ENCODE measurements at regions of chr18 and their contacts with region 1.

Region 1: DNA sequence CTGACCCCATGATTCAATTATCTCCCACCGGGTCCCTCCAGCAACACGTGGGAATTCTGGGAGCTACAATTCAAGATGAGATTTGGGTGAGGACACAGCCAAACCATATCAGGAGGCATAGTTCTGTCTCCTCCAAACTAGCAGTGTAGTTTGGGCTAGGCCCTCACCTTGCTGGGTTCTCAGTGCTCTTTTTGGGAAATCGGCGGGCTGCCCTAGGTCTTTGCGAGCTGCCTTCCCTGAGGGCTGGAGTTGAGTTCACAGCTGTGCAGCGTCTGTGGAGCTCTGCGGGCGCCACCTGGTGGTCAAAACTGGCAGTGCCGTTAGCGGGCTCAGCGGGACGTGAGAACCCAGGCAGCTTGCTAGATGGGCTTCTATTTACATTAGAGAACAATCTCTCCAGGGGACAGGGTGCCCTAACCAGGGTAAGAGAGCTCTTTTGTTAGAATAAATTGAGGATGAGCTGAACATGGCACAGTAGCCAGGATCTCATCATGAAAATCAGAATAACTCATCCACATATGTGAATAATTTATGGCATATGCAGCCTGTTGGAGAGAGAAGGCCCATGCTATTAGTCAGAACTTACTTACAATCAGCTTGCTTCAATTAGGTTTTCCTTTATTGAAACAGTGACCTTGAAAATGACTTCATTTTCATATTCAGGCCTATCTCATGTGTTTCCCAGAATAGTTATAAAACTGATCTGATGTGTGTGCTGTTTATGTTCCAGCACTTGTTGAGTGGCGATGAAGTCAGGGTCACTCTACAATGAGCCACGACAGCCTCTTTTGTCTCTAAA is 27.4 kb upstream of the YES1 start:
- DNase-seq: peak; percentile 56 to 99 (median 84)
- ATAC-seq: peak; percentile 88 to 99 (median 98)
- H3K4me3 ChIP-seq: no peak overlapping the region
- H3K27ac ChIP-seq: no peak overlapping the region
- H3K4me1 ChIP-seq: peaks cover 0 to 6% (median 0%) of the 10 kb centered on the region in 3 donors
- H3K27me3 ChIP-seq: no peaks in the 10 kb centered on the region
- CTCF ChIP-seq: peak; percentile 95 to 98 (median 96)

Region 2: GRCh38 chr18:589228-589627 is 250.2 kb before region 1 on chr18:
- intact Hi-C with region 1: no loop called
- DNase-seq: no peak
- ATAC-seq: no peak
- H3K4me3 ChIP-seq: no peak overlapping the region
- H3K27ac ChIP-seq: no peak overlapping the region
- H3K4me1 ChIP-seq: no peaks in the 10 kb centered on the region
- H3K27me3 ChIP-seq: no peaks in the 10 kb centered on the region
- CTCF ChIP-seq: no peak

Region 3: GRCh38 chr18:623761-624620 is 215.4 kb before region 1 on chr18:
- intact Hi-C with region 1: loop called in 2 of 3 experiments (anchors 10 kb)
- DNase-seq: peak; percentile 53 to 83 (median 71)
- ATAC-seq: peak; percentile 82 to 96 (median 92)
- H3K4me3 ChIP-seq: no peak overlapping the region
- H3K27ac ChIP-seq: no peak overlapping the region
- H3K4me1 ChIP-seq: no peaks in the 10 kb centered on the region
- H3K27me3 ChIP-seq: no peaks in the 10 kb centered on the region
- CTCF ChIP-seq: peak; percentile 46 to 77 (median 64)

Region 4: DNA sequence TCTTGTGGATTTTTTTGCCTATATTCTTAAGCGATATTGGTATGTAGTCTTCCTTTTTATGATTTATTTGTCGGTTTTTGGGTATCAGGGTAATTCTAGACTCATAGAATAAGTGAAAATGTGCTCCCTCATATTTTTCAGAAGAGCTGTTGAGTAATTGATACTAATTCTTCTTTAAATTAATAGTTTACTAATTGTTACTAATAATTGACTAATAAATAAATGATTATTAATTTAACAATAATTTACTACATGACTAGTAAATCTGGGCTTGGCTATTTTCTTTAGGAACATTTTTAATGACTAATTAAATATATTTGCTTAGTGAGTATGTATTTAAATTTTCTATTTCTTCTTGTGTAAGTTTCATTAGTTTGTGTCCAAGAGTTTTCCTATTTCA is 390.2 kb after region 1 on chr18:
- intact Hi-C with region 1: no loop called
- DNase-seq: no peak
- ATAC-seq: no peak
- H3K4me3 ChIP-seq: no peak overlapping the region
- H3K27ac ChIP-seq: no peak overlapping the region
- H3K4me1 ChIP-seq: no peaks in the 10 kb centered on the region
- H3K27me3 ChIP-seq: no peaks in the 10 kb centered on the region
- CTCF ChIP-seq: no peak

Measured in pancreas (tissue), 10 donors.